ENCODE measurements at regions of chr2 and their contacts with region 1.

Region 1: GRCh38 chr2:231706731-231707624 is 1.3 kb upstream of the PTMA start:
- DNase-seq: peak; percentile 98
- ATAC-seq: peak; percentile 68

Region 2: DNA sequence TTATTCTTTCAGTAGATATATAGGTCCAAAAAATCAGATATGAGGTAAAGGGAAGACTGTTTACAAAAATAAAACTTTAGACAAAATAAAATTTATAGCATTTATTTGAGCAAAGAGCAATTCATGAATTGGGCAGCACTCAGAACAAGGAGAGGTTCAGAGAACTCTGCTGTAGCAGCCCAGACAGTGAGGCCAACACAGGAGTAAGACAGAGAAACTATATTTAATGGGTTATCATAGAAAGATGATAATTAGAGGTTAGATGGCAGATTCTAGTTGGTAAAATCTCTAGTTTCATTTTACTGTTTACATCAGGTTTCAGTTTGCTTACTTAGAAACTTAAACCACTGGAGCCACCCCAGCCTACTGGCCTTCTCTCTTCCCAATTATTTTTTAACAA is 1410.1 kb before region 1 on chr2:
- intact Hi-C with region 1: no loop called
- DNase-seq: no peak
- ATAC-seq: no peak

Region 3: DNA sequence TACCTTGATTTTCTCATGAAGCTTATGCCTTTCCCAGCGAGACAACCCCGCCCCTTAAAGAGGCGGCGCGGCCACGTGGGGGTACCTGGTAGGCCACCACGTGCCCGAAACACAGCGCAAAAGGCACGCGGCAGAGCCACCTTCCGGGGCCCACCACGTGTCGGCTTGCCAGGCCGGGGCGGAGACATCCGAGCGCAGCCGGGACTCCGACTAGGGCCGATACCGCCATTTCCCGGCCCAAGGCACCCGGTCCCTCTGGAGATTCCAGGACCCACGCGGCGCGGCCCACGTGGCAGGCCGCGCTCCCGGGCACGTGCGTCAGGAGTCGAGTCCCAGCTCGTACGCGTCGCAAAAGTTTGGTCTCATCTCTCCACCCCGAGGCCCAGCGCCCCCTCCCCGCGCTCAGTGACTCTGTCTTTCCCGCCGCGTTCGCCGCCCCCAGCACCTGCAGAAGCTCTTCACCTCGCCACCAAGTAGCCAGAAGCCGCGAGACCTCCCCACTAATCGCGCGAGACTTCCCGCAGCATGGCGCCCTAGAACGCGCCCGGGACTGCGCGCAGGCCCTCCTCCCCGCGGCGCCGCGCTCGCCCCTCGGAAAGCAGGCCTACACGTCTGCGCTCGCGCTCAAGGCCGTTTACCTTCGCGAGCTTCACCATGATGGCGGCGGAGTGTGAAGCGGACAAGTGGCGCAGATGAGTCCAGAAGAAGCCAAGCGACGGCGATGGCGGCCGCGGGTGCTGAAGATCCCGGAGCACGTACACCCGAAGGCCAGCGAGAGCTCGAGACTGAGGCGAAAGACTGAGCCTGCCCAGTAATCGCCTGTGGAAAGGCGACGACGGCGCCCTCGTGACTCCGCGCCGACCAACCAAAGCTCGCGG is 243.0 kb before region 1 on chr2 and contains the start of gene NCL:
- intact Hi-C with region 1: loop called (anchors 10 kb)
- DNase-seq: peak; percentile 80
- ATAC-seq: peak; percentile 73
- total RNA-seq, gene NCL: 218 TPM

Region 4: DNA sequence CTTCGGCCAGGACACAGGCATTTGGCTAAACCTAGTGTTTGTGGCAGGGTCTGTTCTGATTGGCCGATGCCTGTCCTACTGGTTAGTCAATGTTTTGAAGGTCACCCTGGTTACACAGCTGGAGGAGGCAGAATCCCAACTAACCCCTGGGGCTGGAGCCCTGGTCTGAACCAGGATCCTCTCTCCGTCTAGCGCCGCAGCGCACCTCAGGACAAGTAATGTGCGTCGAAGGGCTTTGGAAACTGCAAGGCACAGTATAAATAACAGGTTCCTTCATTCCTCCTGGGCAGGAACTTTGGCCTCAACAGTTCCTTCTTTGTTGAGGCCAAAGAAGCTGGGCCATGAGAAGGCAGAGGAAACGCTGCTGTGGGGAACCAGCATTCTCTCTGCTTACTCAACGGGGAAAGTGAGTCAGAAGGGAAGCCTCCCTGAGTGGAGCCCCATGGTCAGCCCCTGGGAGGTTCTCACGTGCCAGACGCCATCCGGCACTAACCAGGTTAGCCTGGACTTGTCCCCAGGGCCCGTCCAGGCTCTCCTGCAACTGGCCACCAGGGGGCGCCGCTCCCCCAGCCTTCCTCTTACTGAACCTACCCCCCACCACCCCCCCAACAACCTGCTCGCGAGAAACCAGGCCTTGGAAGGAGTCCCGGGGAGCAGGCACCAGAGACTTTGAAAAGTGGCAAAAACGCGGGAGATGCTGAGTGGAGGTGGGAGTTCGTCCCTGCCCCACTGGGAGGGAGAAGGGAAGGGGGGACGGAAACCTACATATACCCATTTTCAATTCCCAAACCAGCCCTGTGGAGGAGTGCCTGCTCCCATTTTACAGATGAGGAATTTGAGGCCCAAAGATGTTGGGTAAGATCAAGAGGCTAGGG is 94.6 kb before region 1 on chr2:
- intact Hi-C with region 1: loop called (anchors 1 kb)
- DNase-seq: peak; percentile 96
- ATAC-seq: peak; percentile 70

Region 5: DNA sequence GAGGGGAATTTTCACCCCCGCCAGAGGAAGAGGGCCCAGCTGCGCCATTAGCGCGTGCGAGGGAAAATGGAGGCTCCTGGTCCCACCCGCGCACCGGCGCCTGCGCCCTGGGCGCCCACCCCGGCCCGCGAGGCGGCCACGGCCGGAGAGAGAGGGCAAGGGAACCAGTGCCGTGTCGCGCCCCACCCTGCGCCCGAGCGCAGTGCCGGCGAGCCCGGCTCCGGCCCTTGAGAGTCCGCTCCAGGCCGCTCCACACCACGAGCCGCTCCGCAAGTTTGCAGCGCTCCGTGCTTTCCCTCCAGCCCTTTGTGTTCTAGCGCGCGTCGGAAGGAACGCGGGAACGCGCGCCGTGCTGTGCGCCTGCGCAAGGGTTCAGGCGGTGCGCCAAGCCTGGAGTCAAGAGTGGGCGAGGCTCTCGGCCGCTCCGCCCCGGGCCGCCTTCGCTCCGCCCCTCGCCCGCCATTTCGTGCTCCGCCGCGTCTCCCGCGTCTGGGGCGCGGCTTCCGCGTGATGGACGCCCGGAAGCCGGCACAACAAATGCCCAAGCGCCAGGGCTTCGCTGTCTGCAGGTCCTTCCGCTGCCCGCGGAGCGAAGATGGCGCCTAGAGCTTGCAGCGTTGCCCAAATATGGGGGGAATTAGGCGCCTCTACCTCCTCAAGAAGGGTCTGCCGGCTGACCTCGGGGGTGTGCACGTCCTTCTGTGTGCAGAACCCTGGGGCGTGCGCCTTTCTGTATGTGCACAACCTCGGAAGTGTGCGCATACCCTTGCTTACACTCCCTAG is 44.8 kb before region 1 on chr2:
- intact Hi-C with region 1: loop called (anchors 1 kb)
- DNase-seq: peak; percentile 97
- ATAC-seq: peak; percentile 80

Region 6: GRCh38 chr2:231680992-231681853 is 25.8 kb before region 1 on chr2:
- intact Hi-C with region 1: loop called (anchors 1 kb)
- DNase-seq: peak; percentile 92
- ATAC-seq: peak; percentile 94

Region 7: GRCh38 chr2:231752061-231752460 is 45.1 kb after region 1 on chr2:
- intact Hi-C with region 1: no loop called
- DNase-seq: no peak
- ATAC-seq: no peak

Region 8: DNA sequence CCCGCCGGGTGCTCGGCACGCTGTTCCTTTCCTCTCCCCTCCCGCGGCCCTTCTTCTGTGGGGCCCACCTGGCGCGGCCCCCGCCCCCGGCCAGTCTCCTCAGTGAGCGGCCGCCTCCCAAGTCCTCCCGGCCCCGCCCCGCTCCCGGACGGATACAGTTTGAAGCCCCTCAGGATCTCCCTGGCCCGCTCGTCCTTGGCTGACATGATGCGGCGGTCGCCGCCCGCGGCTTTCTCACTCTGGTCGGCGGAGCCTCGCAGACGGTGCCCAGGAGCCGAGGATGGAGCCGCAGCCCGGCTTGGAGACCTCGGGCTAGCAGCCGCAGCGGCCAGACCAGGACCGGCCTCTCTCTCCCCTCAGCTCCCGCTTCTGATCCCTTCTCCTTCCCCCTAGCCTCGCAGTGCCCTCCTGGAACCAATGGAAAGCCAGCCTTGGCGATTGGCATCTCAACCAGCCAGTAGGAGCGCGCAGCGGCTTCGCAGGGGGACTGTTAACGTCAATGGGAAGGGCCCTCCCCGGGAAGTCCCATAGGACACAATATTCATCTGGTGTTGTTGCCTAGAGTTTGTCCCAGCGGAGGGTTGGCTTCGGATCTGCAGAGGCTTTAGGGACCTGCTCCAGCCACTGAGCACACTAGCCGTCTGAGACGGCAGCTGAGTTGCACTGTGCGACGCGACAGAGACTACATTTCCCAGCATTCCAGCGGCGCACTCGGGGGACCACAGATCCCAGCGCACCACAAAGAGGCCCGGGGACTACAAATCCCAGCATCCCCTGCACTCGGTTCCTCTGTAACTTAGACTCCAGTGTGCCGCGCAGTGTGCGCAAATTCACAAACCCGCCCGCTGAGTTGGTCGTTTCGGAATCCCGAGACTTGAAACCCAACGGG is 74.2 kb after region 1 on chr2 and contains the start of gene PDE6D:
- intact Hi-C with region 1: loop called (anchors 5 kb)
- DNase-seq: peak; percentile 98
- ATAC-seq: peak; percentile 97
- total RNA-seq, gene PDE6D: 14.5 TPM